Activated naive CD4-positive, alpha-beta T cell treated with anti-CD3 and anti-CD28 coated beads for 36 hours (primary cell): ENCODE measurements at regions of chr12 and their contacts with region 1.

Region 1: GRCh38 chr12:48890657-48891418 is 25.2 kb upstream of the RND1 start:
- DNase-seq: peak; percentile 86
- H3K4me3 Mint-ChIP-seq: peak overlapping the region; percentile 24
- H3K27ac Mint-ChIP-seq: no peak overlapping the region
- H3K4me1 Mint-ChIP-seq: peaks cover 5% of the 10 kb centered on the region
- H3K27me3 Mint-ChIP-seq: peaks cover 13% of the 10 kb centered on the region

Region 2: DNA sequence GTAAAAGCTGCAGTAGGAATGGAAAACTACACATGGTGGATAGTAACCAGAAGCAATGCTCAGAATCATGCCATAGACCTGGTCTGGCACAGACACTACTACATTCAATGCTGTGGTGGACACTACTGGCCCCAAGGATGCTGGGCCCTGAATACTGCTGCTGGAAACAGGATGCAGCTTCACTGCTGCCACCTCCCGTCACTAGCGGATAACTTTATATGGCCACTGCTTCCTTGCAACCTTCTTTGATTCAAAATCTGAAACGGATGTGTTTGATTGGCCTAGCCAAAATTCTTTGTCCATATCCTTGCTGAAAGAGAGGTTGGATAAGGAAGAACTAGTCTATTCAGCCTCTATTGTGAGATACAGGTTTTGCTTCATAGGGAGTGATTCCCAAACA is 132.6 kb before region 1 on chr12:
- CTCF ChIA-PET with region 1: interaction called, 4 read pairs
- intact Hi-C with region 1: loop called (anchors 2 kb)
- DNase-seq: no peak
- H3K4me3 Mint-ChIP-seq: no peak overlapping the region
- H3K27ac Mint-ChIP-seq: no peak overlapping the region
- H3K4me1 Mint-ChIP-seq: peaks cover 2% of the 10 kb centered on the region
- H3K27me3 Mint-ChIP-seq: no peaks in the 10 kb centered on the region

Region 3: GRCh38 chr12:48865434-48866290 is 25.2 kb before region 1 on chr12 and contains the start of gene RND1:
- CTCF ChIA-PET with region 1: interaction called, 19 read pairs
- intact Hi-C with region 1: loop called (anchors 1 kb)
- DNase-seq: peak; percentile 93
- H3K4me3 Mint-ChIP-seq: peak within 1 kb of the TSS; percentile 87
- H3K27ac Mint-ChIP-seq: peak within 1 kb of the TSS; percentile 62
- H3K4me1 Mint-ChIP-seq: peaks cover 22% of the 10 kb centered on the region
- H3K27me3 Mint-ChIP-seq: peaks cover 22% of the 10 kb centered on the region
- total RNA-seq, gene RND1: 6.8 to 7.4 TPM

Region 4: DNA sequence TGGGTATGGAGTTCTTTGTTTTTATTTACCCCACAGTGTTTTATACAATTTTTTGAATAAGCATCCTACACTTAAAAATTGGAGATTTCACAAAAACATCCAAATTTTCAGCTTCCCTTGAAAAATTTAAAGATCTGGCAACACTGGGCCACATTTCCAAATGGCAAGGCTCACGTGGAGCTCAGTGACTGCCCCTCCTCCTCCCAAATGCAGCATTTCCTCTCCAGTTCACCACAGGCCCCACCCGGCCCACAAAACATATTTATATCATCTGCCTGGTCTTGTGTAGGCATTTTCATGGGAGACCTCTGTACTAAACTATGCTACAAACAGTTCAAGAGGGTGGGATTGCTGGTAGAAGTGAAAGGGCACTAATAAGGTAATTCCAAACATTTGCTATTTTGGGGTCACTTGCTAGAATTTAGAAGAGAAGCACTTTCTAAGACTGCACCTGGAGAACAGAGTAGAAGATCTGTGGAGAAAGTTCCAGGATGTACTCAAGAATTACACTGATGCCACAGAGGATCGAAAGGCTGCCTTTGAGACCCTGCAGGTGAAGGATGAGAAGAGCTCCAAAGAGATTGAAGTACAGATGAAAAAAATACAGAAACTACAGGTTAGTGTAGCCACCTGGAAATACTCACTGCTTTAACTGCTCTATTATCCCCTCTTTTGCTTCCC is 27.2 kb after region 1 on chr12:
- CTCF ChIA-PET with region 1: interaction called, 12 read pairs
- intact Hi-C with region 1: no loop called
- DNase-seq: peak; percentile 58
- H3K4me3 Mint-ChIP-seq: no peak overlapping the region
- H3K27ac Mint-ChIP-seq: peak overlapping the region; percentile 68
- H3K4me1 Mint-ChIP-seq: peaks cover 37% of the 10 kb centered on the region
- H3K27me3 Mint-ChIP-seq: no peaks in the 10 kb centered on the region

Region 5: GRCh38 chr12:48936379-48936979 is 45.6 kb after region 1 on chr12:
- CTCF ChIA-PET with region 1: interaction called, 7 read pairs
- intact Hi-C with region 1: loop called (anchors 1 kb)
- DNase-seq: peak; percentile 90
- H3K4me3 Mint-ChIP-seq: no peak overlapping the region
- H3K27ac Mint-ChIP-seq: peak overlapping the region; percentile 47
- H3K4me1 Mint-ChIP-seq: peaks cover 10% of the 10 kb centered on the region
- H3K27me3 Mint-ChIP-seq: no peaks in the 10 kb centered on the region